Endothelial cell of umbilical vein (primary cell): ENCODE measurements at regions of chr9 and their contacts with region 1.

Region 1: DNA sequence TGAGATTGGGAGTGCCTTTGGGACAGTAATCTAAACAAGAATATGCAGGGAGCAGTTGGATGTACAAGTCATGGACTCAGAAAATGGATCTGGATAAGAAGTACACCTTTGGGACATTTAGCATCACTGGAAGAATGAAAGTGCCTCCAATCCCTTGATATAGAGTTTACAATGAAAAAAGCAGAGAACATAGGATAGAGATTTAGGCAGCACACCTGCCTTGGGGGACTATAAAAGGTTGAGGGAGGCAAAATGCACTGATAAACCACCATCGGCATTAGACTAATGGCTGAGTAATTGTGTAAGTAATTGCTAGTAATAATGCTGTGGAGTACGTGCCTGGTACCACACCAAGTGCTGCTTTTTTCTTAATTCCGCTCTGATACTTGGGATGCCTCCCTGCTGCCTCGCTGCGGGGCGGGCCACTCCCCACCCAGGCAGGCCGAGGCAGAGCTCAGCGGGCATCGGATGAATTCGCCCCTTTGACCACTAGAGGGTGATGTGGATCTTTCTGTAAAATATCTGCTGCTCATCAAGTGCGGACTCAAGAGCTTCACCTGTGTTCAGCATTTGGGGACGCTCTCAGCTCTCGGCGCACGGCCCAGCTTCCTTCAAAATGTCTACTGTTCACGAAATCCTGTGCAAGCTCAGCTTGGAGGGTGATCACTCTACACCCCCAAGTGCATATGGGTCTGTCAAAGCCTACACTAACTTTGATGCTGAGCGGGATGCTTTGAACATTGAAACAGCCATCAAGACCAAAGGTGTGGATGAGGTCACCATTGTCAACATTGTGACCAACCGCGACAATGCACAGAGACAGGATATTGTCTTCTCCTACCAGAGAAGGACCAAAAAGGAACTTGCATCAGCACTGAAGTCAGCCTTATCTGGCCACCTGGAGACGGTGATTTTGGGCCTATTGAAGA is 99.9 kb downstream of the ANKRD18B start:
- DNase-seq: peak; percentile 77
- H3K4me3 ChIP-seq: no peak overlapping the region
- H3K27ac ChIP-seq: no peak overlapping the region
- H3K4me1 ChIP-seq: peaks cover 2% of the 10 kb centered on the region
- H3K27me3 ChIP-seq: peaks cover under 1 to 3% of the 10 kb centered on the region in 2 experiments
- CTCF ChIP-seq: peak; percentile 73 to 84
- POLR2A ChIP-seq: no peak

Region 2: DNA sequence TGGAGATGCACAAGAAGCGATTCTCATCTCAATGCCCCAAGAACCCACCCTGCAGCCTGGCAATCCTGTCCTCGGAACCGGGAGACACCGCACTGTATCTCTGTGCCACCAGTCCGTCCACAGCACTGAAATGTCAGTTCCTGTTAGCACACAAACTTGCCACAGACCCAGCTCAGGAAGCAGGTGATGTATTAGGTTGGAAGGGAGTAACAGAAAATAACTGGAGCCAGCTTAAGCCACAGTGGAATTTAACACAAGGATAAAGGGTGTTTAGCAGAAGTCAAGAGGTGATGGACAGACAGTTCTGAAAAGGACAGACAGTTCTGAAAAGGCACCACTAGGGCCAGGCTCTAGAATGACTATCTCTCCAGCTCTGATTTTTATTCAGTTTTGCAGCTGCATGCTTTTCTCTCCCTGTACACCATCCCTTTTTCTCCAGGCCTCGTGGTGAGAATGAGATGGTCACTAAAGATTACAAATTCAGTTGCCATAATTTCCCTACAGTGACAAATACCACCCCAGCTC is 14.5 kb after region 1 on chr9:
- CTCF ChIA-PET with region 1: interaction called, 20 read pairs
- POLR2A ChIA-PET with region 1: no interaction called
- dilution Hi-C with region 1: no loop called
- intact Hi-C with region 1: no loop called
- DNase-seq: no peak
- H3K4me3 ChIP-seq: no peak overlapping the region
- H3K27ac ChIP-seq: no peak overlapping the region
- H3K4me1 ChIP-seq: no peaks in the 10 kb centered on the region
- H3K27me3 ChIP-seq: peaks cover 34 to 93% of the 10 kb centered on the region in 2 experiments
- CTCF ChIP-seq: no peak
- POLR2A ChIP-seq: no peak

Region 3: GRCh38 chr9:33687779-33688178 is 63.9 kb after region 1 on chr9:
- CTCF ChIA-PET with region 1: interaction called, 19 read pairs
- POLR2A ChIA-PET with region 1: no interaction called
- dilution Hi-C with region 1: no loop called
- intact Hi-C with region 1: no loop called
- DNase-seq: no peak
- H3K4me3 ChIP-seq: no peak overlapping the region
- H3K27ac ChIP-seq: no peak overlapping the region
- H3K4me1 ChIP-seq: no peaks in the 10 kb centered on the region
- H3K27me3 ChIP-seq: peaks cover 30 to 50% of the 10 kb centered on the region in 2 experiments
- CTCF ChIP-seq: no peak
- POLR2A ChIP-seq: no peak

Region 4: DNA sequence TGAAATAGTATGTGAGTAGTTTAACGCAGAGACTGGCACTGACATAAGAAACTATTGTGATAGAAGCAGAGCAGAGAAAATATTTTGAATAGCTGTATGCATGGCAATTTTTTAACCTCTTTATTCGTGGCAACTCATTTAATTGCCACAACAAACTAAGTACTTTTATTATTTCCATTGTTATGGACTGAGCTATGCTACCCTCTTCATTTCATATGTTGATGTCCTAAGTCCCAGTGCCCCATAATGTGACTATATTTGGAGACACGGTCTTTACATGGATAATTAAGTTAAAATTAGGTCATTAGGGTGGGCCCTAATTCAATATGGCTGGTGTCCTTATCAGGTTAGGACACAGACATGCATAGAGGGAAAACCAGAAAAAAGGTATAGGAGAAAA is 85.3 kb after region 1 on chr9:
- CTCF ChIA-PET with region 1: interaction called, 10 read pairs
- POLR2A ChIA-PET with region 1: no interaction called
- dilution Hi-C with region 1: no loop called
- intact Hi-C with region 1: no loop called
- DNase-seq: no peak
- H3K4me3 ChIP-seq: no peak overlapping the region
- H3K27ac ChIP-seq: no peak overlapping the region
- H3K4me1 ChIP-seq: no peaks in the 10 kb centered on the region
- H3K27me3 ChIP-seq: peaks cover 10 to 12% of the 10 kb centered on the region in 2 experiments
- CTCF ChIP-seq: no peak
- POLR2A ChIP-seq: no peak

Region 5: DNA sequence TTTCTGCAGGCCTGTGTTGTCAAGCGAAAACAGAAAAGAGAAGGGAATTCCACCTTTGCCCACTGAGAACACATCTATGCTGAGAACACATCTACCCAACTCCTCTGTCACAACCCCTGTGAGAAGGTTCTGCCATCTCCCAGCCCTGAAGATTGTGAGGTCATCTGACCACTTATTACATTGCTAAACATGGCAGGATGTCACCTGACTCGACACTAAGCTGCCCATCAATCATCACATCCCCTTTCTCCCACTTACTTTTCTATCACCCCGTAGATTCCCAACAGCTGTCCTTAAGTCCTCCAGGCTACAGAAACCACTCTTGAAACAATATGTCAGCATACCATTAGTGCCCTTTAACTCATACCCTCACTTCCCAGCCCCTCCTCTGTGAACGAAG is 107.2 kb after region 1 on chr9:
- CTCF ChIA-PET with region 1: interaction called, 561 read pairs
- POLR2A ChIA-PET with region 1: no interaction called
- dilution Hi-C with region 1: no loop called
- intact Hi-C with region 1: no loop called
- DNase-seq: no peak
- H3K4me3 ChIP-seq: no peak overlapping the region
- H3K27ac ChIP-seq: no peak overlapping the region
- H3K4me1 ChIP-seq: no peaks in the 10 kb centered on the region
- H3K27me3 ChIP-seq: peaks cover 1 to 5% of the 10 kb centered on the region in 2 experiments
- CTCF ChIP-seq: no peak
- POLR2A ChIP-seq: no peak

Region 6: DNA sequence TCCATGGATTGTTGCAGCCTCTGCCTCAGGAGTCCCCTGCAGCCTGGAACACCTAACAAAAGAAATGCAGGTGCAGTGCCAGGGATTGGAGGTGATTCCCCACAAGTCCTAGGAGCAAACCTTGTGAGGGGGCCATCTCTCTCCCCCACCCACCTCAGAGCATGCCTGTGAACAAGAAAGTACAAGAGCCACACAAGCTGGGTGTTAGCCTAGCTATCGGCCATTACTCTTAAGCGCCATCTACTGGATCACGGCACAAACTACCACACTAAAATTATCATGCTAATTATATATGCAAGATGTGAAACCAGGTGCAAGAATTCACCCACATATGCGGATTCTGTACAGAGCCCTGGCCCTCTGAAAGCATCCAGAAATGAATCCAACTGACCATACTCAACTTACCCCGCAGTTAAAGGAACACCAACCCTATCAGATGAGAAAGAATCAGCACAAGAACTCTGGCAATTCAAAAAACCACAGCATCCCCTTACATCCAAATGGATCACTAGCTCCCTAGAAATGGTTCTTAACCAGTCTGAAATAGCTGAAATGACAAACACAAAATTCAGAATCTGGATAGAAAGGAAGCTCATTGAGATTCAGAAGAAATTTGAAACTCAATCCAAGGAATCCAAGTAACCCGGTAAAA is 154.9 kb after region 1 on chr9:
- CTCF ChIA-PET with region 1: interaction called, 21 read pairs
- POLR2A ChIA-PET with region 1: no interaction called
- dilution Hi-C with region 1: no loop called
- intact Hi-C with region 1: no loop called
- DNase-seq: peak; percentile 73
- H3K4me3 ChIP-seq: no peak overlapping the region
- H3K27ac ChIP-seq: no peak overlapping the region
- H3K4me1 ChIP-seq: no peaks in the 10 kb centered on the region
- H3K27me3 ChIP-seq: no peaks in the 10 kb centered on the region
- CTCF ChIP-seq: peak; percentile 72 to 80
- POLR2A ChIP-seq: no peak